CD8-positive, alpha-beta memory T cell (primary cell): ENCODE measurements at regions of chr10 and their contacts with region 1.

Region 1: DNA sequence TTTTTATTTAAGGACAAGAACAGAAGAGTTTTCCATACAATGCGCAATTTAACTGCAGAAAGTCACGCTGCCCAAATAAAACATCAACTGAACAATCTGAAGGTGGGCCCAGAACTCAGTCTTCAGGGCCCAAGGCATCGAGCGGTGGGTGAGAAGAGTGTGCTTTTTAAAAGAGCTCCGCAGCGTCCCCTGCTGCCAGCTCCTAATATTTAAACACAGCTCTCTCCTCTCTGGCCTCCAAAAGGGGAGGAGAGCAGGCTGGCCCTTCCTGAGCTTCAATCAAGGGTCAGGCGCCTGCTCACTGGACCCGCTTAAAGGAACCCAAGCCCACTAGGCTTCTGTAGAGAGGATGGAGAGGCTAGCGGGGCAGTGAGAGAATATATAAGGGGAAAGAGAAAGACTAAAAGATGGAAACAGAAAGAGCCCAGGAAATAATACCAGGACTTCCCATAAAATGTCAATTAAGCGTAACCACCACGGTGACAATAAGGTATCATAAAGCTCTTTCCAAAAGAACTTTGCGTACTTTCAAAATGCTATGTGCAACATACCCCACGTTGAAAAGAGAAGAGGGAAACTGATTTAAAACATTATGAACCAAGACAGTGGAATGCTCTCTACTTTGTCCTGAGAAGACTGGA is 2.8 kb downstream of the FAM53B start:
- DNase-seq: peak; percentile 69 to 82 (median 71)
- H3K4me3 ChIP-seq: peak overlapping the region; percentile 74
- H3K4me3 Mint-ChIP-seq: peak overlapping the region; percentile 95 to 100 (median 98)
- H3K27ac ChIP-seq: peak overlapping the region; percentile 53
- H3K27ac Mint-ChIP-seq: peak overlapping the region; percentile 89 to 98 (median 96)
- H3K4me1 ChIP-seq: peaks cover 72% of the 10 kb centered on the region
- H3K4me1 Mint-ChIP-seq: peaks cover 70 to 77% (median 77%) of the 10 kb centered on the region in 3 donors
- H3K27me3 ChIP-seq: no peaks in the 10 kb centered on the region
- H3K27me3 Mint-ChIP-seq: peaks cover 0 to 1% of the 10 kb centered on the region in 2 donors

Region 2: GRCh38 chr10:124530215-124530665 is 211.2 kb before region 1 on chr10:
- CTCF ChIA-PET with region 1: interaction called, 154 read pairs
- POLR2A ChIA-PET with region 1: interaction called, 3 read pairs
- DNase-seq: peak; percentile 75 to 89 (median 77)
- H3K4me3 ChIP-seq: no peak overlapping the region
- H3K4me3 Mint-ChIP-seq: peak overlapping the region in 2 of 7 donors; percentile 48 to 81
- H3K27ac ChIP-seq: no peak overlapping the region
- H3K27ac Mint-ChIP-seq: peak overlapping the region in 3 of 8 donors; percentile 38 to 92 (median 68)
- H3K4me1 ChIP-seq: no peaks in the 10 kb centered on the region
- H3K4me1 Mint-ChIP-seq: peaks cover 3 to 5% (median 5%) of the 10 kb centered on the region in 3 donors
- H3K27me3 ChIP-seq: no peaks in the 10 kb centered on the region
- H3K27me3 Mint-ChIP-seq: no peaks in the 10 kb centered on the region

Region 3: DNA sequence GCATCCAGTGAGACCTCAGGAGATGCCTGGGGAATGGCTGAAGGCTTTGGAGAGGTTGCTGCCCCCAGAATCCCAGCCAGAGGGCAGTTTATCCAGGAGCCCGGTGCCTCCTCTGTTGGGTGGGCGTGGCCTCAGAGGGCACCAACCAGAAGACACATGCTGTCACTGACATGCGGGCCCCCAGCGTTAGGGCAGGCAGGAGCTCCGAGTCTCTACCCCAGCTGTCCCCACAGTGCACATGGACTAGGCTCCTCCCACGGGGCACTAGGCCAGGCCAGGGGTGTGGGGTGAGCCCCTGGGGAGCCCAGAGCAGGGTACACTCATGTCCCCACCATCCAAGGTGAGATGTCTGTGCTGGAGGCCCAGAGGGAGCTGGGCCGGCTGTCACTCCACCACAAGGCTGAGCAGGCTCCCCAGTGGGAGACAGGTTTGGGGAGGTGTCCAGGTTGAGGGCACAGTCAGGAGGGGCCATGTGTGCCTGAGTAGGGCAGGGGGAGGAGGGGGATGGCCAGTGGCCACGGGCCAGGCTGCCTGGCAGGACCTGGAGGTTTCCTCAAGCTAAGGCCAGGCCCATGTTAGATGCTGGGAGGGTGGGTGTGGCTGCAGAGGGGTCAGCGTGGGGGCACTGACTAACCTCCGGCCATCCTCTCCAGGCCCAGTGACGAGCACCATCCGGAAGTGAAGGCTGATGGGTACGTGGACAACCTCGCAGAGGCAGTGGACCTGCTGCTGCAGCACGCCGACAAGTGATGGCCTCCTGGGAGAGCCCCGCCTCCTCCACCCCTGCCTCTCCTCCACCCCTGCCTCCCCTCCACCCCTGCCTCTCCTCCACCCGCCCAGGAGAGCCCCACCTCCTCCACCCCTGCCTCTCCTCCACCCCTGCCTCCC is 128.5 kb before region 1 on chr10:
- CTCF ChIA-PET with region 1: interaction called, 13 read pairs
- POLR2A ChIA-PET with region 1: interaction called, 9 read pairs
- DNase-seq: peak in 4 of 5 donors; percentile 20 to 67 (median 28)
- H3K4me3 ChIP-seq: no peak overlapping the region
- H3K4me3 Mint-ChIP-seq: peak overlapping the region in 6 of 7 donors; percentile 54 to 94 (median 71)
- H3K27ac ChIP-seq: no peak overlapping the region
- H3K27ac Mint-ChIP-seq: peak overlapping the region; percentile 89 to 98 (median 96)
- H3K4me1 ChIP-seq: peaks cover 36% of the 10 kb centered on the region
- H3K4me1 Mint-ChIP-seq: peaks cover 38 to 71% (median 53%) of the 10 kb centered on the region in 3 donors
- H3K27me3 ChIP-seq: no peaks in the 10 kb centered on the region
- H3K27me3 Mint-ChIP-seq: peaks cover 0 to 3% of the 10 kb centered on the region in 2 donors

Region 4: DNA sequence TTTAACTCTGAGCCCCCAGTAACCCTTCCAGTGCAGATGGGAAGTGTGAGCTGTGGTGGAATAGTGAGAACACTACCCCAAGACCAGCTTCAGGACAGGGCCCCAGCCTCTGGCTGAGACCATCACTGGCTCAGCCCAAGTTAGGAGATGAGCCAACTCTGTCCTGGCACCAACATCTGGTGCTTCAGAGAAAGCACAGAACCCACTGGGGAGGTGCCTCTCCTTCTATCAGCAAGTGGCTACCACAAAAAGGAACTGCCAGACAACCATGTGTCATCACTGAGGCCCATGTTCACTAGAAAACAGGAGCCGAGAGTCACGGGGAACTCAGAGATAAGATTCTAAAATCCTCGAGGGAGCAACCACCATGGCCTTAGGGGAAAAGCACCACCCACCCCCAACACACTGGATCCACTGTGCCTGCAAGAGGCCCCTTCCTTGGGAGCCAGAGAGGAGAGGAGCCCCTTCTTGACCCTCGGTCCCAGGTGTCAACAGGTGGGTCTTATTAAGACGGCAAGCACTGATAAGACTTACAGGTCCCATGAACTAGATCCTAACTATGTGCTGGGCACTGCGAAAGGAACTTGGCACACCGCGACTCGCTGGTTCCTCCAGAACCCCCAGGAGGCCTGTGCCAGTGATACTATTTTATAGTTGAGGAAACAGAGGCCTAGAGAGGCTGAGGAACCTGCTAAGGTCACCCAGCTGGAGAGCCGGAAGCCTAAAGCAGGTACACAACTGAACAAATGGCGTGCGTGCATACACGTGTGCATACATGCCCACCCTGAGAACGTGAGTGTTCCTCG is 99.9 kb before region 1 on chr10:
- CTCF ChIA-PET with region 1: interaction called, 107 read pairs
- POLR2A ChIA-PET with region 1: no interaction called
- DNase-seq: peak in 4 of 5 donors; percentile 30 to 75 (median 55)
- H3K4me3 ChIP-seq: peak overlapping the region; percentile 1
- H3K4me3 Mint-ChIP-seq: peak overlapping the region; percentile 56 to 83 (median 78)
- H3K27ac ChIP-seq: peak overlapping the region; percentile 64
- H3K27ac Mint-ChIP-seq: peak overlapping the region; percentile 96 to 99 (median 98)
- H3K4me1 ChIP-seq: peaks cover 81% of the 10 kb centered on the region
- H3K4me1 Mint-ChIP-seq: peaks cover 80 to 99% (median 91%) of the 10 kb centered on the region in 3 donors
- H3K27me3 ChIP-seq: no peaks in the 10 kb centered on the region
- H3K27me3 Mint-ChIP-seq: peaks cover 0 to 1% of the 10 kb centered on the region in 2 donors

Region 5: DNA sequence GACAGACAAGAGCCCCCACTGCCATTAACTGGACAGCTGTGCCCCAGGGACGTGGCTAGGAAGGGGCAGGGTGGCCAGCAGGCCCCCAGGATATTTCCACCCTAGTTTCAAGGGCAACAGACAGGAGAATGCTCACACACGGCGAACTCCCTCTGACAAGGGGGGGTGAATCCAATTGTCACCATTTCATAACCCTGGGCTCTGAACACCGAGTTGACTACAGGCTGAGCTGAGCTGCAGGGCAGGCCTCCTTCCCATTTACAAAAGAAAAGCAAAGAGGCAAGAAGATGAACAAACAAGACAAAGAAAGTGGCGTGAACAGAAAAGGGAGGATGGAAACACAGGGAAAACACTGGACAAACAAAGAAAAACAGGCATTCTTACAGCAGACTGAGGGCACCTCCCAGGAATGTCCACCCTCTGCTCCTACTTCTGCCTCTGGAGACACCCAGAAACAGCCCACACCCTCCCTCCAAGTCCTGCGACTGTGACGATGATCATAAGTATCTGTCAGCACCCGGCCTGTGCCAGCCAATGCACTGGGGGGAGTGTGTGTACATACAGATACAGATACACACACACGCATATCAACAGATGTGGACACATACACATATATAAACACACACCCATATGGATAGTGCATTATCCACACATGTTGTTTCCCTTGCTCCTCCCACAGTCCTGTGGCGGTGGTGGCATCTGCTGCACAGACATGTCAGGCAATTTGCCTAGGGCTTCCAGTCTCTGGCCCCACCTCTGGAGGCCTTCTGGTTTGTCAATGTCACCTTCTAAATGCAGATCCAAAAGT is 63.4 kb before region 1 on chr10:
- CTCF ChIA-PET with region 1: interaction called, 21 read pairs
- POLR2A ChIA-PET with region 1: interaction called, 8 read pairs
- DNase-seq: no peak
- H3K4me3 ChIP-seq: peak overlapping the region; percentile 11
- H3K4me3 Mint-ChIP-seq: peak overlapping the region; percentile 69 to 88 (median 82)
- H3K27ac ChIP-seq: no peak overlapping the region
- H3K27ac Mint-ChIP-seq: peak overlapping the region; percentile 72 to 96 (median 92)
- H3K4me1 ChIP-seq: peaks cover 96% of the 10 kb centered on the region
- H3K4me1 Mint-ChIP-seq: peaks cover 83 to 97% (median 92%) of the 10 kb centered on the region in 3 donors
- H3K27me3 ChIP-seq: no peaks in the 10 kb centered on the region
- H3K27me3 Mint-ChIP-seq: peaks cover 0 to 2% of the 10 kb centered on the region in 2 donors

Region 6: GRCh38 chr10:124703778-124704427 is 37.5 kb before region 1 on chr10:
- CTCF ChIA-PET with region 1: interaction called, 57 read pairs
- POLR2A ChIA-PET with region 1: interaction called, 3 read pairs
- DNase-seq: peak in 1 of 5 donors; percentile 11
- H3K4me3 ChIP-seq: no peak overlapping the region
- H3K4me3 Mint-ChIP-seq: peak overlapping the region in 4 of 7 donors; percentile 34 to 70 (median 52)
- H3K27ac ChIP-seq: no peak overlapping the region
- H3K27ac Mint-ChIP-seq: peak overlapping the region; percentile 93 to 99 (median 98)
- H3K4me1 ChIP-seq: peaks cover 99% of the 10 kb centered on the region
- H3K4me1 Mint-ChIP-seq: peaks cover 95 to 100% (median 99%) of the 10 kb centered on the region in 3 donors
- H3K27me3 ChIP-seq: no peaks in the 10 kb centered on the region
- H3K27me3 Mint-ChIP-seq: no peaks in the 10 kb centered on the region